ENCODE measurements at regions of chr17 and their contacts with region 1.

Region 1: GRCh38 chr17:4215882-4216570 is 47.8 kb downstream of the ANKFY1 start:
- DNase-seq: no peak

Region 2: GRCh38 chr17:3907483-3908216 is 308.4 kb before region 1 on chr17:
- intact Hi-C with region 1: no loop called
- DNase-seq: no peak

Region 3: DNA sequence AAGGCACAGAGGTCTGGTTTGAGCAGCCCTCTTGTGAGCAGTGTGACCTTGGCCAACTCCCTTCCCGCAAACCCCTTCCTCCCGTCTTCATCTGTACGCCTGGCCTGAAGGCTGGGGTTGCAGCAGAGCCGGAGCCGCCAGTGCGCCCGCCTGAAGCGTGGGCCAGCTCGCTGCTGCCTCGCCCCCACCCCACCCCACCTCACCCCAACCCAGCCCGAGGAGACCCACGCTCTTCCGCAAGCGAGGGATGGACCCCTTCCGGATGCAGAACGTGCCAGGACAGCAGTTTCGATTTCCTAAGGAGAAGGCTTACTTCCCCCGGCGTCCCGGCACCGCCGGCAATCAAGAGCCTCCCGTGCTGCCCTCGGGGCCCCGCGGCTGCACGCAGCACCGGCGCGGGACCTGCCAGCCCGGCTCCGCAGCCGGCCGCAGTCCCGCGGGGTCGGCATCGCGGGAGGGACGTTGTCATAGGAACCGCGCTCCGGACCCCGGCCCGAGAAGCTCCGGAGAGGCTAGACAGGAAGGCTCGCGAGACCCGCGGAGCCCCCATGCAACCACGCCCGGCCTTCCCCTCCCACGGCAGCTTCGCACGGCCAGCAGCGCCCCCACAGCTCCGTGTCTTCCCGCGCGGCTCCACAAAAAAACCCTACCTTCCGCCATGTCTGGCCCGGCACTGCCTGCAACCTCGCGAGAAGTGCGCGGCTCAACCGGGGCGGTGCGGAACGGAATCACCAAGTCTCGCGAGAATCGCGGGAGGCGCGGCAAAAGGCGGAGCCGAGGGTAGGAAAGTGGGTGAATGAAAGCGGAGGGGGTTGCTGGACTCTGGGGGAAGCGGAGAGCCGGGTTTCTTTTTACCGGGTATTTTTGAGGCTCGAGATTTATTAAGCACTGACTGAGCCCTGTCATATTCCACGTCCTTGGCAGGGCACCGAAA is 47.5 kb after region 1 on chr17 and contains the start of gene ANKFY1:
- intact Hi-C with region 1: loop called (anchors 5 kb)
- DNase-seq: peak; percentile 99
- total RNA-seq, gene ANKFY1: 21.4 TPM

Region 4: DNA sequence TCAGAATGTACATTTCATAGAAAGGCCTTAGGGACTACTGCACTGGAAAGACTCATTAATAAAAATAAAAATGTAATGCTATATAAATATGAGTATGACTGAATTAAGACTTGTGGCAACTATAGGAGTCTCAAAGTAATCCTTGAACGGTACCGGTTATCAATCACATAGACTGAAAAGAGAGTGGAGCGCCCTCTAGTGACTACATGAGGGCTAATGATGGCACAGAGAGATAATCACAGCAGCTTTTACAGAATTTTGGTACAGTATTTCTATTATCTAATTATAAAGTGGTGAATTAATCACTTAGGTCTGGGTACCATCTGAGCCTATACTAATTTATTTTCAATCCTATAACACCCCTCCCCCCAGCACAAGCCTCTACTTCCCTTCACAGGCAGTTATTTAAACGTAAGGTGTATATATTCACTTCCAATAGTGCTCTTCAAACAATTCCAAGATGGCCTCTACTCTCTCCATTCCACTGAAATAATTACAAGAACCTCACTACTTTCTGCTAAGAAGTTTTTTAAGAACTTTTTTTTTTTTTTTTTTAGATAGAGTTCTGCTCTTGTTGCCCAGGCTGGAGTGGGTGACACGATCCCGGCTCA is 88.5 kb after region 1 on chr17:
- intact Hi-C with region 1: loop called (anchors 5 kb)
- DNase-seq: no peak

Region 5: DNA sequence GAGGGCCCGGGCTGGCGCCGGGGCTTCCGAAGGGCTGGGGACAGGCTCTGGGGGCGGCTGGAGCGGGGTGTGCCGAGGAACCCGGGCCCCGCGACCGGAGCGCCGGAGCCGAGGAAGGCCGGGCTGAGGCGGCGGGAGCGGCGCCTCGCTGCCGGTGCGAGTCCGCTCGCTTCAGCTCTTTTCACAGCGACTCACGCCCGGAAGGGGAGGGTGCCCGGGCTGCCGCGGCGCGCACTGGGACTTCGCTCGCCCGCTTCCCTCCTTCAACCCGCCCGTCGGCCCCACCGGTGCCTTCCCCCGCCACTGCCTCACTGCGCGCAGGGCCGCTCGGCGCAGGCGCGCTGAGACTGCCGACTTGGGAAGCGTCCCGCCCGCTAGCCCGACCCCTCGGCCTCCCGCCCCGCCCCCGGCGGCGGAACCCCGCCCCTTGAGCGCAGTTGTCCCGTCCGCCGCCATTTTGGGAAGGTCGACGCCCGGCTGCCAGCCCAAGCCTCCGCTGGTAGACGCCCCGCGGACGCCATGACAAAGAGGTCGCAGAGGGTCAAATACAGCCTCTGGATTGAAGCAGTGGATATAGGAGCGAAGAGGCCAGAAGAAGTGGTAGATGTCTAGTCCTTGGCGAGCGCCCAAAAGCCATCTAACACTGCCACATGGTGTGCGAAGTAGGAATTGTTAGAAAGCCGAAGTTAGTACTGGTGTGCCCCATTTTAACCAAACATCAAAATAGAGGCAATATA is 150.5 kb after region 1 on chr17 and contains the start of gene UBE2G1:
- intact Hi-C with region 1: loop called (anchors 2 kb)
- DNase-seq: peak; percentile 99
- total RNA-seq, gene UBE2G1: 80.4 TPM

Region 6: GRCh38 chr17:4412933-4413831 is 197.2 kb after region 1 on chr17:
- intact Hi-C with region 1: loop called (anchors 1 kb)
- DNase-seq: peak; percentile 95